PC-9 (cell line): ENCODE measurements at regions of chr3 and their contacts with region 1.

Region 1: DNA sequence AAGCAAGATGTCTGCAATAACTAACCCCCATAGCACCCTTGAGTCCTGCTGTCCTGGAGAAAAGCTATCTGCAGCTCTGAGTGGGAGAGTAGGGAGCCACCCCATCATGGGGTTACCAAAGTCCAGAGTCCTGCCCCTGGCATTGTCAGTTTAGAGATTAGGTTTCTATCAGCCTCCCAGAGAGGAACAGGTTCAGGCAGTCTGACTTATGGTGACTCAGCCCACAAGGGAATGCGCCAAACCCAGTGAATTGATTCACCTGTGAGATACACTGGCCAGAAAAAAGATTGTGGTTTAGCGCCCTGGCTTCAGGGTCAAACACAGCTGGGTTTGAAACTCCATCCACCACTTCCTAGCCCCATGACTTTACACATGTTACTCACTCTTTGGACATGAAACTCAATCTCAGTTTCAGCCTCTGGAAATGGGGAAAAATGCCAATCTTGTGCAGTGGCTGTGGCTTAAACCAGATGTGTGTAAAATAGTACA is 263.6 kb upstream of the HES1 start:
- DNase-seq: peak; percentile 94 to 100
- H3K4me3 ChIP-seq: no peak overlapping the region; the same call in 1 of the 2 replicates
- H3K27ac ChIP-seq: peak overlapping the region; percentile 94
- H3K4me1 ChIP-seq: peaks cover 83% of the 10 kb centered on the region
- H3K27me3 ChIP-seq: no peaks in the 10 kb centered on the region
- CTCF ChIP-seq: no peak

Region 2: GRCh38 chr3:193816590-193817311 is 55.6 kb before region 1 on chr3:
- CTCF ChIA-PET with region 1: interaction called, 4 read pairs
- POLR2A ChIA-PET with region 1: interaction called, 20 read pairs
- intact Hi-C with region 1: no loop called
- DNase-seq: peak; percentile 94 to 97
- H3K4me3 ChIP-seq: no peak overlapping the region; the same call in 1 of the 2 replicates
- H3K27ac ChIP-seq: peak overlapping the region; percentile 47
- H3K4me1 ChIP-seq: peaks cover 67% of the 10 kb centered on the region
- H3K27me3 ChIP-seq: no peaks in the 10 kb centered on the region
- CTCF ChIP-seq: no peak

Region 3: DNA sequence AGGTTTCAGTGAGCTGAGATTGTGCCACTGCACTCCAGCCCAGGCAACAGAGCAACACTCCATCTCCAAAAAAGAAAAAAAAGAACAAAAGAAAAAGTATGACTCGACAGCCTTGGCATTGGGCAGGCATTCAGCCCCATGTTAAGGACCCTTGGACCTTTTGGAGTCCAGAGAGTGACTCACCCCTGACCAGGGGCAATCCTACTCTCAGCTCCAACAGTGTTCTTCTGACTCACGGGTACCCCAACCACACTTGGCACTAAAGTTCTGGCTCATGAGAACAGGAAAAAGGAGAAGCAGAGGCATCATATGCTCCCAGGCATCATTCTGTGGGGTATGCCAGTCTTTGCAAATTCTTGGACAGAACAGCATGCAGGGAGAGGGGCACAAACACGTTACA is 11.2 kb after region 1 on chr3:
- CTCF ChIA-PET with region 1: no interaction called
- POLR2A ChIA-PET with region 1: interaction called, 3 read pairs
- intact Hi-C with region 1: loop called (anchors 1 kb)
- DNase-seq: peak; percentile 58 to 85
- H3K4me3 ChIP-seq: no peak overlapping the region
- H3K27ac ChIP-seq: peak overlapping the region; percentile 81
- H3K4me1 ChIP-seq: peaks cover 88% of the 10 kb centered on the region
- H3K27me3 ChIP-seq: no peaks in the 10 kb centered on the region
- CTCF ChIP-seq: no peak

Region 4: GRCh38 chr3:193982258-193982659 is 110.0 kb after region 1 on chr3:
- CTCF ChIA-PET with region 1: no interaction called
- POLR2A ChIA-PET with region 1: interaction called, 8 read pairs
- intact Hi-C with region 1: loop called (anchors 1 kb)
- DNase-seq: peak in 1 of 2 experiments; percentile 97
- H3K4me3 ChIP-seq: no peak overlapping the region
- H3K27ac ChIP-seq: no peak overlapping the region
- H3K4me1 ChIP-seq: 0 out of 2 replicates have a peak, but pooled peaks cover 6% of the 10 kb centered on the region
- H3K27me3 ChIP-seq: no peaks in the 10 kb centered on the region
- CTCF ChIP-seq: no peak

Region 5: DNA sequence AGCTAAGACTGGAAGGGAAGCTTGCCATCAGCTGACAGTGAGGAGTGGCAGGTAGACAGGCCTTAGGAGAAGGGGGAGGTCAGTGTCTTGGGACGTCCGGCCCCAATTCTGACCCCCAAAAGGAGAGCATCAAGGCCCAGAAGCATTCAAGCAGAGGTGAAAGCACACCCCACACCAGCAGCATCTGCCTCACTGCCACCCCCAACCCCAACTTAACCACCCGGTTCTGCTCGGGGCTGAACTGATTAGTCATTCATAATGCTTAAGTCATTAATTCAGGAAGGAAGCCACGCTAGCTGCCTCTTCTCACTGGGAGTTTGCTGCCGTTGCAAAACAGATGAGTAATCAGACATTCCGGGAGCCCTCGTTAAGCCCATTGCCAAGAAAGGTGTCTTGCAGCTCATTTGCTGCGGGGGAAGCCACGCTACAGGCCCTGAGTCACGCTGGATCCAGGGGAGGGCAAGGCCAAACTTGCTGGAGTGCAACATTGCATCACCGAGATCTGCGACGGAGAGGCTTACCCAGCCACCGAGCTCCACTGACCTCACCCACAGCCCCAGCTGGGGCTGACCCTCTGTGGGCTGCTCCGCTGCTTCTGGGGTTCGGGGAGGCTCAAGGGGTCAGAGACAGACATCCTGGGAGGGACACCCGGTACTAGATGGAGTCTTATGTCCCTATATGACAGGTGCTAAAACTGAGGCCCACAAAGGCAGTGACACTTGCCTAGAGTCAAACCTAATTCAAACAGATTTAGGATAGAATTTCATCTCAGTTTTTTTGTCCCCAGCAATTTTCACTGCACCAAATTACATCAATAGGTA is 217.3 kb after region 1 on chr3:
- CTCF ChIA-PET with region 1: no interaction called
- POLR2A ChIA-PET with region 1: interaction called, 25 read pairs
- intact Hi-C with region 1: loop called (anchors 1 kb)
- DNase-seq: peak; percentile 98 to 100
- H3K4me3 ChIP-seq: peak overlapping the region; percentile 16; the same call in 1 of the 2 replicates
- H3K27ac ChIP-seq: peak overlapping the region; percentile 98
- H3K4me1 ChIP-seq: peaks cover 48% of the 10 kb centered on the region
- H3K27me3 ChIP-seq: no peaks in the 10 kb centered on the region
- CTCF ChIP-seq: no peak

Region 6: GRCh38 chr3:194315088-194315964 is 443.0 kb after region 1 on chr3:
- CTCF ChIA-PET with region 1: interaction called, 5 read pairs
- POLR2A ChIA-PET with region 1: no interaction called
- intact Hi-C with region 1: loop called (anchors 1 kb)
- DNase-seq: peak; percentile 91 to 97
- H3K4me3 ChIP-seq: peak overlapping the region; percentile 51
- H3K27ac ChIP-seq: peak overlapping the region; percentile 75
- H3K4me1 ChIP-seq: peaks cover 27% of the 10 kb centered on the region
- H3K27me3 ChIP-seq: no peaks in the 10 kb centered on the region
- CTCF ChIP-seq: peak; percentile 99